IMR-90 (cell line): ENCODE measurements at regions of chr7 and their contacts with region 1.

Region 1: DNA sequence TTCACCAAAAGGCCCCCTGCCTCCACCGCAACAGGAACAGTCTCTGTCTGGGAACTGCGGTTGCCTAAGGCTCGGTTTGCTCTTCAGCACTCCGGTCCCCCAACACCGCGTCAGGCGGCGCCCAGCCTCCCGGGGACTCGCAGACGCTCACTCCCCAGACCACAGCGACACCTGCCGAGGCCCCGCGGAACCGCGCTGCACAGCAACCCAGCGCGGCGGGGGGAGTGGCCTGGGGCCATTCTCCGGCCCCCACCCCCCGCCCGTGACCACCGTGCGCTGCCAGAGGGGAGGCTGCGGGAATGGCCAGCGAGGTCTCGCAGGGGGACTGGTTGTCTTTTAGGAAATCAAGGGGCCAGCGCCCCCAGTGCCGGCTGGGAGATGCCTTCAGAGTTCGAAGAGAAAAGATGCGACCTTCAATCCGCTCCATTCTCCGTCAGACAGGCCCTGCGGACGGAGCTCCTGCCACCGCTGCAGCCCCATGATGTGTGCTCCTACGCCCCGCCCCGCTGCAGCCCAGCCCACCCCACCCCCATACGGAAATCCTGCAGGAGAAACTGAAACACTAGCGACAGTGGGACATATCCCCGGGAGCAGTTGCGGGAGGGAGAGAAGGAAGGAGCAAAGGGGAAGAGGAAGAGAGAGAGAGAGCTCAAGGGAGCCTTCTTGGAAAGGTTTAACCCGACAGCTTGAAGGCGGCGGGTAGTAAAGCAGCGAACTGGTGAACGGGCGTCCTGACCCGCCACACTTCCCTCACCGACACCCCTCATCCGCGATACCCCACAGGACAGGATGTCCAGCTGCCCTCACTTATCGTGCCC is 137.4 kb upstream of the CDCA7L start:
- DNase-seq: peak; percentile 65
- ATAC-seq: peak; percentile 99
- H3K4me3 ChIP-seq: peak overlapping the region; percentile 70
- H3K27ac ChIP-seq: peak overlapping the region; percentile 1
- H3K4me1 ChIP-seq: no peaks in the 10 kb centered on the region
- H3K27me3 ChIP-seq: peaks cover 2% of the 10 kb centered on the region; the same call in 1 of the 2 replicates
- CTCF ChIP-seq: peak; percentile 89
- POLR2A ChIP-seq: no peak
- RAD21 ChIP-seq: peak; percentile 76

Region 2: DNA sequence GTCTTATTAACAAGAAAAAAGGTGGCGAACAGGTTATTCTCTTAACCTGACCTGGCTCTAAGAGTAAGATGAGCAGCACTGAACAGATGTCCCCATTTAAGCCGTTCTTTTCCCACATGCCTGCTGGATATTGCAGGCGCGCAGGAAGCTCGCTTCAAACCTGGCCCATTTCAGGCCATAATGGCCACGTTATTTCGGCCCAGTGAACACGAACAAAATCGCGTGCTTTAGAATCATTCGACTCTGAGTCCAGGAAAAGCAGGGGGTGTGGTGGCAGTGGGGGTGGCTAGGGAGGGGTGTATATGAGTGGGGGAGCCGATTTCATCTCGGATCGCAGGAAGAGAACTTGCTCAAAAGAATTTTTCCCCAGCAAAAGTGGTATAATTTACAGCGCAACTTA is 1289.8 kb before region 1 on chr7:
- CTCF ChIA-PET with region 1: no interaction called
- POLR2A ChIA-PET with region 1: interaction called, 15 read pairs
- dilution Hi-C with region 1: no loop called
- in situ Hi-C with region 1: no loop called
- intact Hi-C with region 1: no loop called
- DNase-seq: no peak
- ATAC-seq: no peak
- H3K4me3 ChIP-seq: no peak overlapping the region
- H3K27ac ChIP-seq: no peak overlapping the region
- H3K4me1 ChIP-seq: peaks cover 4% of the 10 kb centered on the region; the same call in 1 of the 2 replicates
- H3K27me3 ChIP-seq: peaks cover 64% of the 10 kb centered on the region
- CTCF ChIP-seq: no peak
- POLR2A ChIP-seq: no peak
- RAD21 ChIP-seq: no peak

Region 3: DNA sequence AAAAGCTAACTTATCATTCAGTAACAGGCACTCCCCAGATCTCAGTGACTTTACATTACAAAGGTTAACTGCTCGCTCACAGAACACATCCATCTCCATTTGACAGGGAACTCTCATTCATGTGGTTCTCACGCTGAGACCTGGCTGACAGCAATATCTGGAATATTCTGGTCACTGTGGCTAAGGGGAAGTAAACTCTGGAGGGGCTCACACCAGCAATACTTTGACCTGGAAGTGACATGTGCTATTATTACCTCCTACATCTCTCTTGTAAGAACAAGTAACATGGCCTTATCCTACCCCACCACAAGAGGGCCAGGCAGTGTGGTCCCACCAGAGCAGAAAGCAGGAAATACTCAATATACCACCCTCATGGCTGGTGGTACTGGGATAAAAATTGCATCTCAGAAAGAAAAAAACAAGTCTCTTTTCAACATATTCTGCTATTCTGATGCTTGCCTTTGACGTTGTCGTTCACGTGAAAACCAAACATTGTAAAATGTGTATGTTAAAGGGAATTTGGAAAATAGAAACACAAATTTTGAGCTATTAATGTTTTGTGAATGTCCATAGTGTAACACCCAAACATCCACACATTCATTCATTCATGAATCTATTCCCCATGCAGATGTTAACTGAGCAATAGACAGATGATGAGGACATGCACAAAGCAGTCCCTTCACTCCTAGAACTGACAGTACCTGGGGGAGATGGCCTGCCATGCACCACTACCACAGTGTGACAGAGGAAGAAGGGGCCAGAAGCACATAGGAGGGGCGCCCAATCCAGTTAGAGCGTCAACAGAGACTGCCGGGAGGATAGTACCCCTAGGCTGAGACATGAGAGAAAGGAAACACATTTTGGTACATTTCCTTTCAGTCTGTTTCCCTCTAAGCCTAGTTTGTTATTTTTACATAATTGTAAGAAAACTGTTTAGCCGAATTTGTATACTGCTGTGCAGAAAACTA is 821.2 kb before region 1 on chr7:
- CTCF ChIA-PET with region 1: no interaction called
- POLR2A ChIA-PET with region 1: no interaction called
- dilution Hi-C with region 1: no loop called
- in situ Hi-C with region 1: no loop called
- intact Hi-C with region 1: loop called (anchors 1 kb)
- DNase-seq: peak; percentile 18
- ATAC-seq: peak; percentile 48; the same call in 1 of the 2 replicates
- H3K4me3 ChIP-seq: no peak overlapping the region
- H3K27ac ChIP-seq: no peak overlapping the region
- H3K4me1 ChIP-seq: no peaks in the 10 kb centered on the region
- H3K27me3 ChIP-seq: no peaks in the 10 kb centered on the region
- CTCF ChIP-seq: peak; percentile 46
- POLR2A ChIP-seq: no peak
- RAD21 ChIP-seq: peak; percentile 50

Region 4: DNA sequence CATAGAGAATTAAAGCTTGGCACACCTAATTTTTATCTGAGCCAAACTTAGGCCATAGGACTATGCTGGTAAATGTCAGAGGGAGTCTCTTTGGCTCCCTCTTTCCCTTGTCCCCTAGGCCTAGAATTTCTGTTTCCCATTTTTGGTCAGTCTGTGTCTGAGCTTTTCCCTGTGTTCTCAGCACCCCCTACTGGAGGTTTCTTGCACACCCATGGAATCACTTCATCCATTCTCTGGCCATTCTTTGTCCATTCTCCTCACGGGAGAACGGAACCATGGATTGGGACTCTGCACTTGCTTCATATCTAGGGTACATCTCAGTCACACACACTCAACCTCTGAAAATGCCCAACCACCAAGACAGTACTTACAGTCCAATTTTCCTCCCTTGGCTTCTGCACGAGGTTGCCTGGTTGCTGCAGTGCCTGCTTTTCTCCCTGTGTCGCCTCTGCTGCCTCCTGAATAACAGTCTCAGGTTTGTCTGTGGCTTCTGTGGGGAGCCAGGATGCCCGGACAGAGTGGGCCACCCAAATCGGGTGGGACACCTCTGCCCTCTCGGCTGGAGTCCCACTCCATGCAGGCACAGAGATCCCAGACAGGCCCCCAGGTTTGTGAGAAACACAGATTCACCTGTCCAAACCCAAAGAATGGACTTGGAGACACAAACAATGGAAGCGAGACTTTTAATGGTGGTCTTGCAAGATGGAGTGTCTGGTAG is 575.3 kb before region 1 on chr7:
- CTCF ChIA-PET with region 1: no interaction called
- POLR2A ChIA-PET with region 1: no interaction called
- dilution Hi-C with region 1: no loop called
- in situ Hi-C with region 1: no loop called
- intact Hi-C with region 1: loop called (anchors 5 kb)
- DNase-seq: peak; percentile 42
- ATAC-seq: peak; percentile 95
- H3K4me3 ChIP-seq: no peak overlapping the region
- H3K27ac ChIP-seq: no peak overlapping the region
- H3K4me1 ChIP-seq: no peaks in the 10 kb centered on the region
- H3K27me3 ChIP-seq: no peaks in the 10 kb centered on the region
- CTCF ChIP-seq: peak; percentile 80
- POLR2A ChIP-seq: no peak
- RAD21 ChIP-seq: peak; percentile 89